ENCODE measurements at regions of chr3 and their contacts with region 1.

Region 1: DNA sequence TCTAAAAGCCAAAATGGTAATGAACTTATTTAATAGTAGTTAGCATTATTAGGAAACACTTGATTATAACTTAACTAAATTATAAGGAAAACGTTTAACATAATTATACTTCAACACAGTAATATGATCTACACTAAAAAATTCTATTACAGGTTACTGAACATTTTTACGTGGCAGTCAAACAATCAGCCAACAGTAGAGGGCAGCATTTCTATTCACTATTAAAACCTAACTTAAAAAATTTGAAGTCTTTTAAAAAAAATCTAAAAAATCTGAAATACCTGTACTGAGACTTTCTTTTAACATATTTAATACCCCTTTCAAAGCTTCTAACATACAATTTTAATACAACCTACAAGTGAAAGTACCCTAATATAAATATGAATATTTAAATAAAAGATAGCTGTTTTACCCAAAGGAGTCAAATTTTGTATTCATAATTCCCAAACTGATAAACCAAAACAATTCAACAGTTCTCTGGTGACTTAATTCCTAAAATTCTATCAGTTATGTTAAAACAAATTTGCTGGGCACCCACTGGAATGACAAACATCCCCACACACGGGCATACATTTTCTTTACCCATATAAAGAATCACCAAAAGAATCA is 41.5 kb downstream of the DLG1 start:
- DNase-seq: peak; percentile 7
- H3K4me3 ChIP-seq: no peak overlapping the region
- CTCF ChIP-seq: peak; percentile 30

Region 2: GRCh38 chr3:196894557-196895297 is 362.2 kb before region 1 on chr3:
- CTCF ChIA-PET with region 1: no interaction called
- POLR2A ChIA-PET with region 1: no interaction called
- DNase-seq: no peak
- H3K4me3 ChIP-seq: no peak overlapping the region
- CTCF ChIP-seq: no peak

Region 3: DNA sequence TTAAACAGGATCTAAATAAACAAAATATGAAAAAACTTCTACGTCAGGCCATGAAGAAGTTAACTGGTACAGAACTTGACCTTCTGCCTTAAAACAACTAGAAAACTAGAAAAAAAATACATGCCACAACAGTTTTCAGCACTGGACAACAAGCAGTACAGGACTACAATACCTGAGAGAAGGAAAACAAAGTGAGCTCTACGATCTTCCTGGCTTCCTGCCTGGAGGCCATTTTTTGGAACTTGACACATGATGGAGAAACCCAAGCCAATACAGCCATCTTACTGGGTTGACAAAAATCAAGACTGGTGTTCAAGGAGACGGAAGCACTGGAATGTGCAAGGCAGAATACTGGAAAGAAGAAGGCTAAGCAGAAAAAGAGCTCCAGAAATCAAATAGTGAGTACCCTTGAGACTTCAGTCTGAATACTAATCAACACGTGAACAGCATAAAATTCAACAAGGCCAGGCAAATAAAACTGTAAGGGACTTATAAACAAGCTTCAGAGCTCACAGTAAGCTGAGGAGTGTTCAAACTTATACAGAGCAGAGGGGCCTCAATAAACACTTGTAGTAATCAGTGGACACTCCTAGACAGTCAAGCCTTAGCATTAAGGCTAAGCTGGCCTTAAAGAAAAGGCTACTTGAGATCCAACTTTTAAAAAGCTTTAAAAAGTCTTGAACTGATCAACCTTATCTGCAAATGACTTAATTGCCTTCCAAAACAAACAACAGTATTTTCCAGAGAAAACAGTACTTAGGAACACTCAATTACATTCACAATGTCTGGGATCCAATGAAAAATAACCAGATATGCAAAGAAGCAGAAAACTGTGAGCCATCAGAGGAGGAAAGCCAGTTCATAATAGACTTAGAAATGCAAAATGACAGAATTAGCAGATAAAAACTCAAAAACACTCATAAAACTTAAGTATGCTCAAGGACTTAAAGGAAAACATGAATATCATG is 21.7 kb before region 1 on chr3:
- CTCF ChIA-PET with region 1: interaction called, 51 read pairs
- POLR2A ChIA-PET with region 1: no interaction called
- DNase-seq: no peak
- H3K4me3 ChIP-seq: no peak overlapping the region
- CTCF ChIP-seq: no peak

Region 4: DNA sequence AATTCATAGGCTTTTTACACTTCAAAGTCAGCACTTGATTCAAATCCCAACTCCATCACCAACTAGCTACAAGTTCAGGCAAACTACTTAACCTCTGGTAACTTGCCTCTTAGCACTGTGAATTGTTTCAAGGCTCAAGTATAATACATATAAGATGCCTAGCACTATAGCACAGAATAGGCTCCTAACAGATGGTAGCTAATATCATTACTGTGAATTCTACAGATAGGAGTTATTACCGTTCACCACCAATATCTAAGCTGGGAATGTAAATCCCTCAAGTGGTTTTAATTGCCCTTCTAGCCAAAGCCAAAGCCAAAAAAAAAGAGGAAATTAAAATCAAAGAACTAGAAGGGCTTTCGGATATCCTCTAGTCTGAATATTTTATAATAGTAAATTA is 26.1 kb after region 1 on chr3:
- CTCF ChIA-PET with region 1: interaction called, 21 read pairs
- POLR2A ChIA-PET with region 1: no interaction called
- DNase-seq: no peak
- H3K4me3 ChIP-seq: no peak overlapping the region
- CTCF ChIP-seq: no peak

Region 5: DNA sequence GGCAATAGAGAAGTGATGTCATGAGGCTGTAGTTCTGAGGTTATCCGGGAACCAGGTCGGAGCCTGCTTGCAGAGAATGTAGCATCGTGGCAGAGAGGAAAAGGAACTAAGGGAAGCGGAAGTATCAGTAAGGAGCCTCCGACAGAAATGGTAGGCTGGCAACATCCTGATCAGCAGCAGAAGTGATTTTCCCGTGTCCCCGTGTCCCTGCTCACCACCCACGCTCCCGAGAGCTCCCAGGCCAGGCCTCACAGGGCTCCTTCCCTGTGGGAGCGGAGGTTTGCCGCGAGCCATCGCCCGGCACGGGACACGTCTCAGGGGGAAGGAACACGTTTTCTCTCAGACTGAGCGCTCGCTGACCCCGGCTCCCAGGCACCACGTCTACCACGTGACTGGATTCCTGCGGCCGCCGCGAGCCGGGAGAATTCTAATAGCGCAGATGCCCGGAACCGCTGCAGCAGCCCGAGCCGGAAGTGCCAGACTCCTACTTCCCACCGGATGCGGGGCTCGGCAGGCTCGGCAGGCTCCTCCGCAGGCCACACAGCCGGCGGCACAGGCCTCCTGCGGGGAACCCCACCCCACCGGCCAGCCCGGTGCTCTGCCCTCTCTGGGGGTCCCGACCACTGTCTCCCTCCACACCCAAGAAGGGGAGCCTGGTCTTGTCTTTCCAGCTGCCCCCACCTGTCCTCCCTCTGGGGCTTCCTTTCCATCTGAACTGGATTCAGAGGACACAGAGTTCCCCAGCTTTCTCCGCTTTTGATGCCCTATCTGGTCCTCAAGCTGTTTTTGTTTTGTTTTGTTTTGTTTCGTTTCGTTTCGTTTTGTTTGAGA is 199.5 kb after region 1 on chr3:
- CTCF ChIA-PET with region 1: interaction called, 30 read pairs
- POLR2A ChIA-PET with region 1: no interaction called
- DNase-seq: no peak
- H3K4me3 ChIP-seq: peak overlapping the region; percentile 53
- CTCF ChIP-seq: no peak

Region 6: GRCh38 chr3:197511130-197511529 is 254.2 kb after region 1 on chr3:
- CTCF ChIA-PET with region 1: interaction called, 79 read pairs
- POLR2A ChIA-PET with region 1: no interaction called
- DNase-seq: no peak
- H3K4me3 ChIP-seq: no peak overlapping the region
- CTCF ChIP-seq: no peak

Measured in AG04449 (cell line).